ENCODE measurements at regions of chr6 and their contacts with region 1.

Region 1: DNA sequence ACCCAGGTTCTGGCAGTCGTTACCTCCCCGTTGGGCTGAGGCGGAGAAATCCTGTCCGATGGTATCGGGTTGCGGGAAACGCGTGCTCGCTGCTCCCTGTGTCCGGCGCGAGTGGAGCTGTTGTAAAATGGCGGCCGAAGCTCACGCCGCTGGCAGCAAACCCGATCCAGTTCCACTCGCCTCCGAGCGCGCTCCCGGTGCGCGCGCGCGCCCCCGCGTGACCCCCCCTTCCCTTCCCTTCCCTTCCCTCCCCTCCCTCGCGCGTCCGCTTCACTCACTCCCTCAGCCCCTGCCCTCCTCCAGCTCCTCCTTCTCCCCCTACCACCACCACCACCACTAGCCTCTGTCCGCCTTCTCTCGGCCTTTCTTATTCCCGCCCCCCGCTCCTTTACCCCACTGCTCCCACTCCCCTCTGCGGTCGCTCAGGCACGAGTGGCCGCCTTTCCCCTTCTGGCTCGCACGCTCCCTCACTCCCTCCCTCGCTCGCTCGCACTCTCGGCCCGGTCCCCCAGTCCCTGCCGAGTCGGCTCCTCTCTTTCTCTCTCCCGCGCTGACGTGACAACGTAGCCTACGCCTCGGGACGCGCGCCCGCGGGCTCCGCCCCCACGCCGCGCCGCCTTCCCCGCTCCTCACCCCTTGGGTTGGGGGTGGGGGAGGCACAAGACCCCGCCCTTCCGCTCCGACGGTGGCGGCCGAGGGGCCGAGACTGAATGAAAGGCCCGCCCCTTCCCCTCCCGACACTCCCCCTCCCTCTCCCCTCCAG is at the start of gene SYNCRIP:
- DNase-seq: peak; percentile 98 to 99
- H3K4me3 ChIP-seq: peak within 1 kb of the TSS; percentile 90 to 99 (median 97)
- H3K27ac ChIP-seq: peak within 1 kb of the TSS; percentile 98 to 99 (median 99)
- H3K4me1 ChIP-seq: peaks cover 39 to 47% of the 10 kb centered on the region in 2 donors
- H3K27me3 ChIP-seq: no peaks in the 10 kb centered on the region
- CTCF ChIP-seq: no peak
- POLR2A ChIP-seq: peak; percentile 69 to 96
- total RNA-seq, gene SYNCRIP: 107 to 144 (median 125) TPM

Region 2: GRCh38 chr6:85593438-85594196 is 49.3 kb before region 1 on chr6 and contains the start of gene SNX14:
- intact Hi-C with region 1: loop called (anchors 5 kb)
- DNase-seq: peak; percentile 97 to 99
- H3K4me3 ChIP-seq: peak within 1 kb of the TSS; percentile 80 to 95 (median 80)
- H3K27ac ChIP-seq: peak within 1 kb of the TSS; percentile 92 to 94 (median 93)
- H3K4me1 ChIP-seq: peaks cover 9 to 22% of the 10 kb centered on the region in 2 donors
- H3K27me3 ChIP-seq: no peaks in the 10 kb centered on the region
- CTCF ChIP-seq: peak in 3 of 6 experiments; percentile 19 to 35 (median 24)
- POLR2A ChIP-seq: peak; percentile 37 to 93
- total RNA-seq, gene SNX14: 94.9 to 160 (median 124) TPM

Region 3: DNA sequence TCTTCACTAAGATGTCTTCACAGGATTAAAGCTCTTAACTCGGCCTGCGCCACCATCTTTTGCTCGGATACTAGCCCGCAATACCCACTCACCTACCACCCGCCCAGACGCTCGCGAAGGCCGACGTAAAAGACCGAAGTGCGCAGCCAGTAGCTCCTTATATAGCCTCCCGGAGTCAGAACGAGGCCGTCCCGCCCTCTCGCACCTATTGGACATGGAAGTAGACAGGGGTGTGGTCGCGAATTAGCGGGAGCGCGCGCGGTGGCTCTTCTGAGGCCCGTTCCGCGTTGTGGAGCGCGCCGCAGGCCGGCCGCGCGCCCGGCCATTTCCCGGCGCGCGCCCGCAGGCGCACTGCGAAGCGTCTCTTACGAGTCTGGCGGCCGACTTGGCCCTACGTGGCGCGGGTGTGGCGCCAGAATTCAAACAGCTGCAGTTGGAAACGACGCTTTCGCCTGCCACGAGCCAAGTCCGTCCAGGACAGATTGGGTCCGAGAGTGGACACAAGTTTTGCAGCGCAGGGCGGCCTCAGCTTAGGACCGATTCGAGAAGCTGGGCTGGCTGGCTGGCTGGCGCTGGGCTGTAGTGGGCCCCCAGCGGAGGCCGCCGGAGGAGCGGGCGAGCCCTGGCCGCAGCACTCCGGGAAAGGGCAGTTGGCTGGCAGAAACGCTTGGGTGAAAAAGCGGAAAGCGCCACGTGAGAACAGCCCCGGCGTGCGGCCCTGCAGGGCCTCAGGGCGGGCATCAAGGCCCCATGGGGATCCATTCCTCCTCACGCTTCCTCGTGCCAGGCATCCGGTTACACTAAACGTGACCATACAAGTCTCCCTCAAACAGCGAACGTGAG is 35.9 kb after region 1 on chr6:
- intact Hi-C with region 1: loop called (anchors 2 kb)
- DNase-seq: peak; percentile 98 to 99
- H3K4me3 ChIP-seq: peak overlapping the region; percentile 88 to 95 (median 95)
- H3K27ac ChIP-seq: peak overlapping the region; percentile 79 to 91 (median 91)
- H3K4me1 ChIP-seq: peaks cover 12 to 15% of the 10 kb centered on the region in 2 donors
- H3K27me3 ChIP-seq: no peaks in the 10 kb centered on the region
- CTCF ChIP-seq: peak in 1 of 6 experiments; percentile 23
- POLR2A ChIP-seq: peak; percentile 99 to 100

Region 4: DNA sequence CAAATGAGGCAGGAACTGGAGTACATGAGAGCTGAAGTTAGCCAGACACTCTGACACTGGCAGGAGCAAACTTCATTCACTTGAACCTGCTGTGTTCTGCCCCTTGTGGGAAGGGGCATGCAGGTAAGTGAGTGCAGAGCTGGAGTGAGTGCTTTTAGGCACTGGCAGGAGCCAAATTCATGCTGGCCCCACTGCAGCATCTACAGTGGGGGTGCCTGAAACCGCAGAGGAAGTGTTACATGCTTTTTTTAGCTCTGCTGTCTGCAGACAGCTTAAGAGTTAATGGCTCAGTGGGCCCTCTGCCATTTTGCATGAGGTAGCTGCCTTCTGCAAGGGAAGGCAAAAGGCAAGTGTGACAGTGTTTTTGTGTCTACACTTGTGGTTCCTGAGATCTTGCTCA is 167.6 kb after region 1 on chr6:
- intact Hi-C with region 1: no loop called
- DNase-seq: no peak
- H3K4me3 ChIP-seq: no peak overlapping the region
- H3K27ac ChIP-seq: no peak overlapping the region
- H3K4me1 ChIP-seq: no peaks in the 10 kb centered on the region
- H3K27me3 ChIP-seq: no peaks in the 10 kb centered on the region
- CTCF ChIP-seq: no peak
- POLR2A ChIP-seq: no peak

Measured in thyroid gland (tissue), 4 donors.